ENCODE measurements at regions of chr1 and their contacts with region 1.

Region 1: GRCh38 chr1:178344513-178345082 is 152.2 kb downstream of the CLEC20A start:
- DNase-seq: no peak
- H3K4me3 ChIP-seq: no peak overlapping the region
- H3K27ac ChIP-seq: peak overlapping the region; percentile 48 to 74 (median 62)
- H3K4me1 ChIP-seq: peaks cover 0 to 61% (median 46%) of the 10 kb centered on the region in 4 donors
- H3K27me3 ChIP-seq: no peaks in the 10 kb centered on the region
- CTCF ChIP-seq: peak in 3 of 4 experiments; percentile 10 to 55 (median 42)
- EP300 ChIP-seq: no peak
- POLR2A ChIP-seq: no peak

Region 2: GRCh38 chr1:178282949-178283367 is 61.6 kb before region 1 on chr1:
- intact Hi-C with region 1: no loop called
- DNase-seq: no peak
- H3K4me3 ChIP-seq: no peak overlapping the region
- H3K27ac ChIP-seq: no peak overlapping the region
- H3K4me1 ChIP-seq: peaks cover 0 to 8% (median 0%) of the 10 kb centered on the region in 4 donors
- H3K27me3 ChIP-seq: no peaks in the 10 kb centered on the region
- CTCF ChIP-seq: peak in 3 of 4 experiments; percentile 17 to 32 (median 28)
- EP300 ChIP-seq: no peak
- POLR2A ChIP-seq: no peak

Region 3: GRCh38 chr1:178300352-178300699 is 44.3 kb before region 1 on chr1:
- intact Hi-C with region 1: loop called (anchors 5 kb)
- DNase-seq: no peak
- H3K4me3 ChIP-seq: no peak overlapping the region
- H3K27ac ChIP-seq: peak overlapping the region in 2 of 4 donors; percentile 58 to 63
- H3K4me1 ChIP-seq: peaks cover 0 to 15% (median 8%) of the 10 kb centered on the region in 4 donors
- H3K27me3 ChIP-seq: no peaks in the 10 kb centered on the region
- CTCF ChIP-seq: no peak
- EP300 ChIP-seq: no peak
- POLR2A ChIP-seq: no peak

Region 4: GRCh38 chr1:178417858-178418257 is 73.3 kb after region 1 on chr1:
- intact Hi-C with region 1: no loop called
- DNase-seq: no peak
- H3K4me3 ChIP-seq: no peak overlapping the region
- H3K27ac ChIP-seq: no peak overlapping the region
- H3K4me1 ChIP-seq: no peaks in the 10 kb centered on the region
- H3K27me3 ChIP-seq: no peaks in the 10 kb centered on the region
- CTCF ChIP-seq: no peak
- EP300 ChIP-seq: no peak
- POLR2A ChIP-seq: no peak

Measured in sigmoid colon (tissue), 7 donors.